ENCODE measurements at regions of chr12 and their contacts with region 1.

Region 1: DNA sequence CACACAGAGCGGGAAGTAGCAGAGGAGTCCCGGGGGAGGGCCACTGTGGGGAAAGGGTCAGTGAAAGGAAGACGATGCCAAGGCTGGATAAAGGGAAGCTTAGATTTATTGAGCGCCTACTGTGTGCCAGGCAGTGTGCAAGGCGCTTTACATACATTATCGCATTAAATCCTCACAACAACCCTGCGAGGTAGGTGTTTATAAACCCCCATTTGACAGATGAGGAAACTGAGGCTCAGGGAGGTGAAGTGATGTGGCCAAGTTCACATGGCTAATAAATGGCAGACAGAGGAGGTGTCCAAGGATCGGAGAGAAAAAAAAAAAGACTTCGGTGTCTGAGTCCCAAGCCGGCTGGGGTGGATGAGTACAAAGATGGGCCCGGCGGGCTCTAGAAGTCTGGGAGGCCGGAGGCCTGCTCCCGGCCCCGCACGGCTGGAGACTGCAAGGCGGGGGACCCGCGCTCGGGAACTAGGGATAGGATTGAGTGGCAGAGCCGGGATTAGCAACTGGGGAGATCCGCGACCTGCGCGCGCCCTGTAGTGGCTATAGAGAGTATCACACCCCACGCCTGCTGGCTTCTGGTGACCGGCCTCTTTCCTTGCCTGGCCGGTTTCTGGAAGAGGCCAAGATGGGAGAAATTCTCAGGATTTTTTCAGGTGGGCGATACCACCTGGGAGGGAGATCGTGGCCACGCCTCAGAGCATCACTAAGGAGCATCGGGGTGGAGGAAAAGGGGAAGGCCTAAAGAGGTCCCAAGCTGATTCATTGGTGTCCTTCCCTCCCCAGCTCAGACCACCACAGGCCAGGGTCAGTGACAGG is 3.9 kb downstream of the DDN start:
- DNase-seq: peak; percentile 69
- H3K4me3 Mint-ChIP-seq: peak overlapping the region; percentile 10
- H3K27ac Mint-ChIP-seq: no peak overlapping the region
- H3K4me1 Mint-ChIP-seq: peaks cover 33% of the 10 kb centered on the region
- H3K27me3 Mint-ChIP-seq: peaks cover 54% of the 10 kb centered on the region

Region 2: DNA sequence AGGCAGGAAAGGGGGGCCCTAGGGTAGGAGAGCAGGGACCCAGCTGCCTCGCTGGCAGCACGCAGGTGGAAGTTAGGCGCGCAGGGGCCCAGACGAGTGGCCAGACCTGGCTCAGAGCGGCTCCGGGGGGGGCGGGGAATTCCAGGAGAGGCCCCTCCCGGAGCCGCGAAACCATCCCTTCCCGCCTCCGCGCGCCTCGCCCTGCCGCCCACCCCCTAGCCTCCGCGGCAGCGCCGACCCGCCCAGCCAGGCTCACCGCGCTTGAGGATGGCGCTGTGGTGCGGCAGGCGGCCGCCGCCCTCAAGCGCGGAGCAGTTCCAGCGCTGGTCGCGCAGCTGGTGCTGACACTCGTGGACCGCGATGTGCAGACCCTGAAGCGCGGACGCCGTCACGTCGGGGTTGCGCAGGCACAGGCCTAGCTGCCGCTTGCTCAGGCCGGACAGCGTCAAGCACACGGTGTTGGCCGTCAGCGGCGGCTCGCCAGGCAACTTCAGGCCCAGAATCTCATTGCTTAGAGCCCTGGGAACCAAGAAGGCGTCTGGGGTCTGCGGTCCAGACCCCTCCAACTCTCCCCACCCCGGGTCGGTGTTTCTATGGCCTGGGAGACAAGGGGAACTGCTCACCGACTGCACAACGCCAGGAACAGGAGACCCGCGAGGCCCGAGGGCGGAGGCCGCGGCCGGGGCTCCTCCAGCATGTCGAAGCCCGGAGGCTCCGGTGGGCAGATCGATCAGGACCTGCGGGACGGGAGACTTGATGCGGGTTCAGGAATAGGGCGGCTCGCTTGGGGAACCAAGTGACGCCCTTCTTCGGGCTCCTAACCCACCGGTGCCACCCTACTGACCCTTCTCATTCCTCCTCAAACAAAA is 25.2 kb before region 1 on chr12:
- CTCF ChIA-PET with region 1: interaction called, 19 read pairs
- intact Hi-C with region 1: no loop called
- DNase-seq: peak; percentile 48
- H3K4me3 Mint-ChIP-seq: no peak overlapping the region
- H3K27ac Mint-ChIP-seq: no peak overlapping the region
- H3K4me1 Mint-ChIP-seq: peaks cover 31% of the 10 kb centered on the region
- H3K27me3 Mint-ChIP-seq: peaks cover 42% of the 10 kb centered on the region

Region 3: DNA sequence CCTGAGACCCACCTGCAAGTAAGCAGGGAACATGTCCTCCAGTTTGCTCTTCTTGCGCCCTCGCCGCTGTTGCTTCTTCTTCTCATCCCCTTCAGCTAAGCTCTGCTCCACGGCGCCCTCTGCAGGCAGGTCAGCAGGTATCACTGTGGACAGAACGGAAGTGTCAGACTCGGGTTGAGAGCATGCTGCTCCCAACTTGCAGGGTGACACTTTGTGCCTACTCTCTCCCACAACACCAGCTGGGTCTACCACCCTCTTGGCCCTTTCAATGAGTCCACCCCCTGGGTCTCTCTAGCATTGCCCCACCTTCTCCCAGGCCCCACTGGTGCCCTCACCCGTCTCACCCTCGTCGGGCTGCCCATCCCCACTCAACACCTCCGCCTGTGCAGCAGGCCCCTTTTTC is 48.6 kb after region 1 on chr12:
- CTCF ChIA-PET with region 1: interaction called, 9 read pairs
- intact Hi-C with region 1: loop called (anchors 2 kb)
- DNase-seq: peak; percentile 85
- H3K4me3 Mint-ChIP-seq: no peak overlapping the region
- H3K27ac Mint-ChIP-seq: no peak overlapping the region
- H3K4me1 Mint-ChIP-seq: peaks cover 2% of the 10 kb centered on the region
- H3K27me3 Mint-ChIP-seq: no peaks in the 10 kb centered on the region